Ascending aorta (tissue), 2 donors: ENCODE measurements at regions of chr20 and their contacts with region 1.

Region 1: DNA sequence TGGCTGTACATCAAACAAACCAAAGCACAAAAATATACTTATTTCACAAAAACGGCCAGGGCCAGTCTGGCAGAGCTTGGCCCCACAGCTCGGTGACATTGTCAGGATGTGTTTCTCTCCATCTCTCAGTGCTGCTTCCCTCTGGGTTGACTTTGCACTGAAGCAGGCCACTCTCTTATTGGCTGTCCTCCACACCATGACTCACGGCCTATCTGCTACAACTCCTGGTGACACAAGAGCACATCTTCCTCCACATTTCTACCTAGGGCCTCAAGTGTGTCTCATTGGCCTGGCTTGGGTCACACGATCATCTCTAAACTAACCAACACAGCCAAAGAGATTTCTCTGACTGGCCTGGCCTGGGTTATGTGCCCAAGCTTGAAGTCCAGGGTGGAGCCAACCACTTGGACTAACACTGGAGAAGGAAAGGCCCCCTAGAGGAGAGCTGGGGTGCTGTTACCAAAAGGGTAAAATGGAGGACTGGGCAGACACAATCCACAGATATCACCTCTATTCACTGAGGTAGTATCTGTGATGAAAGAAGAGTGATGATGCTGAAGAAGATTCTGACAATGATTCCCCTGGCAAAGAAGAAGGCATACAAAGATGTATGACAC is 159.8 kb upstream of the TSHZ2 start:
- DNase-seq: no peak
- H3K4me3 ChIP-seq: no peak overlapping the region
- H3K27ac ChIP-seq: no peak overlapping the region
- H3K4me1 ChIP-seq: no peaks in the 10 kb centered on the region
- H3K27me3 ChIP-seq: no peaks in the 10 kb centered on the region
- CTCF ChIP-seq: no peak

Region 2: DNA sequence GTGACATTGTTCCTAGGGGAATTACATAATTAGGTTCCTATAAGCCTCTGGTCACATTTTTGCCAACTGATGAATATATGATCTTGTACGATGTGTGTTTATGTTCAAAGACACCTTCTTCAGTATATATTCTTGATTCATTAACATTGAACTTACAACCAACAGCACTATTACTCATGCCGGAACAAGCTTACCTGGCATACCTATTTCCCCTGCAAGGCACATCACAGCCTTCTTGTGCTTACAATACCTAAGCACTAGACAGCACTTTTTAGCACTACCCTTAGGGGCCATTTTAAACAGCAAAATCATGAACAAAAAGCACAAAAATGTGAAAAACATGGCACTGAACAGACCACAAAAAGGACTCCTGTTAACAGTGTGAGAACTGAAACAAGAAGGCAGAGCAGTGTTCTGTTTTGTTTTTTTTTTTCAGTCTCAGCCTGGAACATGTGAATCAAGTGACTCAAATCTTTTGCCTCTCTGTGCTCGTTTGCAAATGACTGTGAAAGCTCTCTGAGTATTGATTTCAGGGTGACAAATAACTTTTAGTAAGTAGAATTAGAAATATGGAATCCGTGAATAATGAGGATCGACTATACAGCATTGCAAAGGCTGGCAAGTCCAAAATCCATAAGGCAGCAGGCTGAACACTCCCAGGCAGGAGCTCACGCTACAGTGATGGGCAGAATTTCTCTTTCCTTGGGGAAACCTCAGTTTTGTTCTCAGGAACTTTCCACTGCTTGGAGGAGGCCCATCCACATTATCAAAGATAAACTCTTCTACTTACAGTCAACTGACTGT is 57.6 kb after region 1 on chr20:
- intact Hi-C with region 1: loop called (anchors 10 kb)
- DNase-seq: no peak
- H3K4me3 ChIP-seq: no peak overlapping the region
- H3K27ac ChIP-seq: no peak overlapping the region
- H3K4me1 ChIP-seq: no peaks in the 10 kb centered on the region
- H3K27me3 ChIP-seq: no peaks in the 10 kb centered on the region
- CTCF ChIP-seq: no peak